ENCODE measurements at regions of chr2 and their contacts with region 1.

Region 1: GRCh38 chr2:108988796-108989713 is at the start of gene EDAR:
- DNase-seq: peak; percentile 81
- H3K4me3 Mint-ChIP-seq: peak within 1 kb of the TSS; percentile 78
- H3K27ac Mint-ChIP-seq: peak within 1 kb of the TSS; percentile 47
- H3K4me1 Mint-ChIP-seq: peaks cover 56% of the 10 kb centered on the region
- H3K27me3 Mint-ChIP-seq: no peaks in the 10 kb centered on the region
- total RNA-seq, gene EDAR: 1.1 to 1.3 TPM

Region 2: GRCh38 chr2:108324531-108325251 is 664.4 kb before region 1 on chr2:
- CTCF ChIA-PET with region 1: no interaction called
- intact Hi-C with region 1: no loop called
- DNase-seq: no peak
- H3K4me3 Mint-ChIP-seq: no peak overlapping the region
- H3K27ac Mint-ChIP-seq: no peak overlapping the region
- H3K4me1 Mint-ChIP-seq: no peaks in the 10 kb centered on the region
- H3K27me3 Mint-ChIP-seq: peaks cover 3% of the 10 kb centered on the region

Region 3: GRCh38 chr2:108607706-108608301 is 381.3 kb before region 1 on chr2:
- CTCF ChIA-PET with region 1: no interaction called
- intact Hi-C with region 1: loop called (anchors 5 kb)
- DNase-seq: peak; percentile 68
- H3K4me3 Mint-ChIP-seq: no peak overlapping the region
- H3K27ac Mint-ChIP-seq: no peak overlapping the region
- H3K4me1 Mint-ChIP-seq: peaks cover 31% of the 10 kb centered on the region
- H3K27me3 Mint-ChIP-seq: no peaks in the 10 kb centered on the region

Region 4: GRCh38 chr2:108855194-108855593 is 133.9 kb before region 1 on chr2:
- CTCF ChIA-PET with region 1: interaction called, 29 read pairs
- intact Hi-C with region 1: loop called (anchors 1 kb)
- DNase-seq: no peak
- H3K4me3 Mint-ChIP-seq: no peak overlapping the region
- H3K27ac Mint-ChIP-seq: no peak overlapping the region
- H3K4me1 Mint-ChIP-seq: peaks cover 2% of the 10 kb centered on the region
- H3K27me3 Mint-ChIP-seq: no peaks in the 10 kb centered on the region

Region 5: GRCh38 chr2:108965540-108966236 is 23.4 kb before region 1 on chr2:
- CTCF ChIA-PET with region 1: interaction called, 13 read pairs
- intact Hi-C with region 1: loop called (anchors 2 kb)
- DNase-seq: peak; percentile 74
- H3K4me3 Mint-ChIP-seq: no peak overlapping the region
- H3K27ac Mint-ChIP-seq: no peak overlapping the region
- H3K4me1 Mint-ChIP-seq: peaks cover 93% of the 10 kb centered on the region
- H3K27me3 Mint-ChIP-seq: no peaks in the 10 kb centered on the region

Region 6: DNA sequence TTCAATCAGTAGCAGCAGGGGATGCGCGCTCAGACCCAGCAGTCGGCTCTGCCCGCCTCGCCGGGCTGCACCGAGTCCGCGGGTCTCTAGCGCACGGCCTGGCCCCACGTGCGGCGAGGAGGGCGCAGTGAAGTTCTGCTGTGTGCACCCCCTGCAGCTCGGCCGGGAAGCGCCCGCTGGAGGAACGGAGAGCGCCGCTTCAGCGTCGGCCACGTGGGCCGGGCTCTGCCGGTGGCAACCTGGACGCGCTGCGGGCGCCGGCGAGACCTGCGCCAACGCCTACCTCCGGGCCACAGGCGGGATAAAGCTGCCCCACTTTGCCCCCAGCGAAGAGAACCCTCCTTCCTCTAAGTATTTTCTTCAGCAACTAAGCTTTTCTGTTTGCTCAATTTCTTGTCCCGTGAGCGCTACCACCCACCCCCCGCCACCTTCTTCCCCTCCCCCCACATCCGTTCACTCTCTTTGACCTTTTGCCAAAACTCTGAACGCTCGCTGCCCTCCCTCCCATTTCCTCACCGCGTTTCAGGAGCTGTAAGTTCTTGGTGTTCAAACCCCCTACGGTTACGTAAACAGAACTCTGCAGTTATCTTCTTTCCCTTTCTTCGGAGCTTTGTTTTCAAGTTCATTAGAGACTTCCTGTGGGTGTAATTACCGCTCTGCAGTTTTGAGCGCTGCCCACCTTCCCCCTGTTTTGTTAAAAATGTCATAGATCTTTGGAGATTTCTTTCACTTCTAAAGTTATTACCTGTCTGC is 42.6 kb after region 1 on chr2:
- CTCF ChIA-PET with region 1: interaction called, 4 read pairs
- intact Hi-C with region 1: loop called (anchors 1 kb)
- DNase-seq: peak; percentile 85
- H3K4me3 Mint-ChIP-seq: peak overlapping the region; percentile 81
- H3K27ac Mint-ChIP-seq: peak overlapping the region; percentile 91
- H3K4me1 Mint-ChIP-seq: peaks cover 65% of the 10 kb centered on the region
- H3K27me3 Mint-ChIP-seq: no peaks in the 10 kb centered on the region

Measured in activated naive CD4-positive, alpha-beta T cell treated with anti-CD3 and anti-CD28 coated beads for 36 hours (primary cell).